ENCODE measurements at regions of chr4 and their contacts with region 1.

Region 1: GRCh38 chr4:138870737-138871554 is 144.6 kb upstream of the NOCT start:
- DNase-seq: peak; percentile 39 to 89 (median 62)
- H3K4me3 ChIP-seq: no peak overlapping the region
- H3K27ac ChIP-seq: no peak overlapping the region
- H3K4me1 ChIP-seq: no peaks in the 10 kb centered on the region
- H3K27me3 ChIP-seq: no peaks in the 10 kb centered on the region
- CTCF ChIP-seq: peak; percentile 79 to 92 (median 83)
- POLR2A ChIP-seq: no peak

Region 2: GRCh38 chr4:138035781-138036258 is 835.1 kb before region 1 on chr4:
- intact Hi-C with region 1: loop called in 1 of 2 experiments (anchors 5 kb)
- DNase-seq: peak in 2 of 7 donors; percentile 9 to 19
- H3K4me3 ChIP-seq: no peak overlapping the region
- H3K27ac ChIP-seq: no peak overlapping the region
- H3K4me1 ChIP-seq: no peaks in the 10 kb centered on the region
- H3K27me3 ChIP-seq: no peaks in the 10 kb centered on the region
- CTCF ChIP-seq: peak; percentile 30 to 69 (median 58)
- POLR2A ChIP-seq: no peak

Region 3: GRCh38 chr4:139266583-139267257 is 395.8 kb after region 1 on chr4:
- intact Hi-C with region 1: no loop called
- DNase-seq: peak; percentile 68 to 94 (median 86)
- H3K4me3 ChIP-seq: peak overlapping the region in 2 of 4 donors; percentile 5 to 35
- H3K27ac ChIP-seq: peak overlapping the region; percentile 60 to 84 (median 69)
- H3K4me1 ChIP-seq: peaks cover 21 to 31% of the 10 kb centered on the region in 2 donors
- H3K27me3 ChIP-seq: no peaks in the 10 kb centered on the region
- CTCF ChIP-seq: no peak
- POLR2A ChIP-seq: peak in 1 of 2 donors; percentile 31

Measured in adrenal gland (tissue), 19 donors.